Naive thymus-derived CD4-positive, alpha-beta T cell (primary cell): ENCODE measurements at regions of chr1 and their contacts with region 1.

Region 1: GRCh38 chr1:151198255-151199127 is at the start of gene PIP5K1A:
- DNase-seq: peak; percentile 96 to 99 (median 97)
- ATAC-seq: peak; percentile 98
- H3K4me3 ChIP-seq: peak within 1 kb of the TSS; percentile 83
- H3K4me3 Mint-ChIP-seq: peak within 1 kb of the TSS; percentile 93 to 100 (median 98)
- H3K27ac ChIP-seq: peak within 1 kb of the TSS; percentile 88
- H3K27ac Mint-ChIP-seq: peak within 1 kb of the TSS; percentile 95 to 99 (median 98)
- H3K4me1 ChIP-seq: peaks cover 11% of the 10 kb centered on the region in 2 donors
- H3K4me1 Mint-ChIP-seq: peaks cover 31 to 56% (median 46%) of the 10 kb centered on the region in 7 donors
- H3K27me3 ChIP-seq: no peaks in the 10 kb centered on the region
- H3K27me3 Mint-ChIP-seq: peaks cover 0 to 12% (median 0%) of the 10 kb centered on the region in 5 donors
- total RNA-seq, gene PIP5K1A: 56.9 to 76.5 (median 59.5) TPM

Region 2: DNA sequence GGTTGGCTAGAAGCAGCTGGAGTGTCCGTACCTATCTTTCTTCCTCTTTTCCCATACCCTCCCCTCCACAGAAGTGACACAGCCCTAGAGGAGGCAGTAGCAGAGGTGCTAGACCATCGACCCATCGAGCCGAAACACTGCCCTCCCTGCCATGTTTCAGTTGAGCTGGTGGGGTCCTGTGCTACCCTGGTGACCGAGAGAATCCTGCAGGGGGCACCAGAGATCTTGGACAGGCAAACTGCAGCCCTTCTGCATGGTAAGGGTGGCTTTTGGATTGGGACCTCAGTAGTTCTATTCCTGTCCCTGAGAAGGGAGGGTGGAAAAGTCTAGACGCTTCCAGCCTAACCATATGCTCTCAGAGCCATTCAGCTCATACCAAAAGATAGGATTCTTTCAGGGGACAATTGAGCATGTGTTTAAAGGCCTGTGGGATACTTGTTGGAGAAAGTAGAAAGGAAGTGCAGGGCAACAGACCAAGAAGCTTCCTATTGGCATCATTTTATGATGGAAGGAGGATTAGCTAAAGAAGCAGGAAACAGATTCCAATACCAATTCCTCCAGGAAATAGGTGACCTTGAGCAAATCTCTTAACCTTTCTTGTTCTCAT is 173.8 kb before region 1 on chr1:
- CTCF ChIA-PET with region 1: interaction called, 4 read pairs
- POLR2A ChIA-PET with region 1: no interaction called
- intact Hi-C with region 1: loop called in 1 of 2 experiments (anchors 1 kb)
- DNase-seq: peak; percentile 72 to 91 (median 83)
- ATAC-seq: peak; percentile 100
- H3K4me3 ChIP-seq: no peak overlapping the region
- H3K4me3 Mint-ChIP-seq: peak overlapping the region; percentile 16 to 73 (median 61)
- H3K27ac ChIP-seq: no peak overlapping the region
- H3K27ac Mint-ChIP-seq: peak overlapping the region; percentile 37 to 93 (median 74)
- H3K4me1 ChIP-seq: no peaks in the 10 kb centered on the region
- H3K4me1 Mint-ChIP-seq: peaks cover 4 to 22% (median 6%) of the 10 kb centered on the region in 7 donors
- H3K27me3 ChIP-seq: no peaks in the 10 kb centered on the region
- H3K27me3 Mint-ChIP-seq: no peaks in the 10 kb centered on the region

Region 3: GRCh38 chr1:151085953-151086559 is 112.4 kb before region 1 on chr1:
- CTCF ChIA-PET with region 1: no interaction called
- POLR2A ChIA-PET with region 1: no interaction called
- intact Hi-C with region 1: no loop called
- DNase-seq: no peak
- ATAC-seq: no peak
- H3K4me3 ChIP-seq: no peak overlapping the region
- H3K4me3 Mint-ChIP-seq: no peak overlapping the region
- H3K27ac ChIP-seq: no peak overlapping the region
- H3K27ac Mint-ChIP-seq: no peak overlapping the region
- H3K4me1 ChIP-seq: no peaks in the 10 kb centered on the region
- H3K4me1 Mint-ChIP-seq: peaks cover 0 to 2% (median 0%) of the 10 kb centered on the region in 7 donors
- H3K27me3 ChIP-seq: no peaks in the 10 kb centered on the region
- H3K27me3 Mint-ChIP-seq: no peaks in the 10 kb centered on the region

Region 4: GRCh38 chr1:151165738-151166505 is 32.6 kb before region 1 on chr1 and contains the starts of genes LYSMD1 and SCNM1:
- CTCF ChIA-PET with region 1: no interaction called
- POLR2A ChIA-PET with region 1: interaction called, 4 read pairs
- intact Hi-C with region 1: loop called (anchors 1 to 2 kb)
- DNase-seq: peak; percentile 78 to 98 (median 97)
- ATAC-seq: peak; percentile 98
- H3K4me3 ChIP-seq: peak within 1 kb of the TSS; percentile 97
- H3K4me3 Mint-ChIP-seq: peak within 1 kb of the TSS; percentile 87 to 99 (median 95)
- H3K27ac ChIP-seq: peak within 1 kb of the TSS; percentile 71
- H3K27ac Mint-ChIP-seq: peak within 1 kb of the TSS; percentile 90 to 99 (median 97)
- H3K4me1 ChIP-seq: peaks cover 18 to 19% of the 10 kb centered on the region in 2 donors
- H3K4me1 Mint-ChIP-seq: peaks cover 30 to 70% (median 52%) of the 10 kb centered on the region in 7 donors
- H3K27me3 ChIP-seq: no peaks in the 10 kb centered on the region
- H3K27me3 Mint-ChIP-seq: peaks cover 0 to 3% (median 0%) of the 10 kb centered on the region in 5 donors
- total RNA-seq, gene LYSMD1: 1.4 to 3.3 (median 2.3) TPM
- total RNA-seq, gene SCNM1: 37.1 to 73.1 (median 57.1) TPM

Region 5: DNA sequence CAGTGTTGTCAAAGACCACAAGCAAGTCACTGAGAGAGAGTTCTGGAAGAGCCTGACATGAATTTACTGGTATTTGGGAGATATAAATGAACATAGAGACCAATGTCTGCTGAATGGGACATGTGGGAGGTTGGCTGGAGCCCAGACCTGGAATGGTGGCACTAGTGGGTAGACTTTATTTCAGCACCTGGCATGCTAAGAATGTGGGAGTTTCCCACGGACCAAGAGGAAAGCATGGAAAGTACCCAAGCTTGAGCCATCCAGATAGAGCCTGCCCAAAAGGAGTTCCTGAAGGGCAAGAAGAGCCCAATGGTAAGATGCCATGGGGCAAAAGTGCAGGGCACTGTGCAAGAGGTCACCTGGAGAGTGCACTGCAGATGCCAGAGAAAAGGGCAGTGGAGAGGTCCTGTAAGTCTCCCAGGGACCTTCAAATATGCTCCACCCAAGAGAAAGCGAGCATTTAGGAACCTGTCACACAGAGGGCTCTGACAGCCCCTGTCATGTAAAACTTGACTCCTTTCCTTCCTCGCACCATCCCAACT is 75.5 kb after region 1 on chr1:
- CTCF ChIA-PET with region 1: no interaction called
- POLR2A ChIA-PET with region 1: no interaction called
- intact Hi-C with region 1: no loop called
- DNase-seq: no peak
- ATAC-seq: no peak
- H3K4me3 ChIP-seq: no peak overlapping the region
- H3K4me3 Mint-ChIP-seq: no peak overlapping the region
- H3K27ac ChIP-seq: no peak overlapping the region
- H3K27ac Mint-ChIP-seq: peak overlapping the region in 3 of 9 donors; percentile 9 to 60 (median 22)
- H3K4me1 ChIP-seq: no peaks in the 10 kb centered on the region
- H3K4me1 Mint-ChIP-seq: peaks cover 0 to 14% (median 0%) of the 10 kb centered on the region in 7 donors
- H3K27me3 ChIP-seq: no peaks in the 10 kb centered on the region
- H3K27me3 Mint-ChIP-seq: no peaks in the 10 kb centered on the region

Region 6: DNA sequence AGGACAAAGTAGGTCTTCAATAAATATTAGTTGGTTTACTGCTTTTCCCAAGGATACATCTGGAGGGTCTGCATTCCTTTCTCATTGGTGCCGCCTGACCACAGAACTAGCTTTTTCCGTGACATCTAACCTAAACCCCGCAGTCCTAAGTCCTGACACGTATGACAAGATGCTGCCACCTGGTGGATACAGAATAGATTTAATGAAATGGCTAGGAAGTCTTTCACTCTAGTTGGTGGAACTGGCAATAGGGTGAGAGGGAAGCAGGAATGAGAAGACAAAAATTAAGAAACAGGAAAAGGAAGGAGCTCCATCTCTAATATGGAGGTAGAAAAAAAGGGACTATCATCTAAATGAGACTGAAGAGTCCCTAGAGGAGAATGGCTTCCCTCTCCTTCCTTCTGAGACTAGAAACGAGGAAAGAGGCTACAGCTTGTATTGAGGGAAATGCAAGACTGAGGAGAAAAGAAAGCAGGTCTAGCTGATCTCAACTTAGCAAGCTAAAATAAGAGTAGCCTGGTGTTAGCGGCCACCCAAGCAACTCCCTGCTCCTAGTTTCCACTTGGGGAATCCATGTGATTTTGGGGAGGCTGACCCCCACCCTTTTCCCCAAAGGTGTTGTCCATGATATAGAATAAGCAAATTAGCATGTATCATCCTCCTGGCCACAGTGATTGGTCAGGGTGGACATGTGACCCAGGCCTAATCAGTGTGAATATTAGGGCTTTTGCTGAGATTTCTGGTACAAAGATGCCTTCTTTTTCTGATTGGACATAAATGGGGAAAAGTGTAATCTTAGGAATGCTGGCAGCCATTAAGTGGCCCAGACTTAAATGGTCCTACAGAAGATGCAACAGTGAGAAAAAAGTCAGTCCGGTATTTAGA is 142.6 kb after region 1 on chr1:
- CTCF ChIA-PET with region 1: interaction called, 3 read pairs
- POLR2A ChIA-PET with region 1: interaction called, 3 read pairs
- intact Hi-C with region 1: loop called (anchors 1 to 2 kb)
- DNase-seq: peak in 8 of 9 donors; percentile 46 to 75 (median 68)
- ATAC-seq: peak; percentile 92
- H3K4me3 ChIP-seq: no peak overlapping the region
- H3K4me3 Mint-ChIP-seq: peak overlapping the region in 1 of 10 donors; percentile 22
- H3K27ac ChIP-seq: peak overlapping the region; percentile 5
- H3K27ac Mint-ChIP-seq: peak overlapping the region; percentile 1 to 70 (median 52)
- H3K4me1 ChIP-seq: peaks cover 6 to 7% of the 10 kb centered on the region in 2 donors
- H3K4me1 Mint-ChIP-seq: peaks cover 20 to 39% (median 28%) of the 10 kb centered on the region in 7 donors
- H3K27me3 ChIP-seq: no peaks in the 10 kb centered on the region
- H3K27me3 Mint-ChIP-seq: no peaks in the 10 kb centered on the region

Region 7: DNA sequence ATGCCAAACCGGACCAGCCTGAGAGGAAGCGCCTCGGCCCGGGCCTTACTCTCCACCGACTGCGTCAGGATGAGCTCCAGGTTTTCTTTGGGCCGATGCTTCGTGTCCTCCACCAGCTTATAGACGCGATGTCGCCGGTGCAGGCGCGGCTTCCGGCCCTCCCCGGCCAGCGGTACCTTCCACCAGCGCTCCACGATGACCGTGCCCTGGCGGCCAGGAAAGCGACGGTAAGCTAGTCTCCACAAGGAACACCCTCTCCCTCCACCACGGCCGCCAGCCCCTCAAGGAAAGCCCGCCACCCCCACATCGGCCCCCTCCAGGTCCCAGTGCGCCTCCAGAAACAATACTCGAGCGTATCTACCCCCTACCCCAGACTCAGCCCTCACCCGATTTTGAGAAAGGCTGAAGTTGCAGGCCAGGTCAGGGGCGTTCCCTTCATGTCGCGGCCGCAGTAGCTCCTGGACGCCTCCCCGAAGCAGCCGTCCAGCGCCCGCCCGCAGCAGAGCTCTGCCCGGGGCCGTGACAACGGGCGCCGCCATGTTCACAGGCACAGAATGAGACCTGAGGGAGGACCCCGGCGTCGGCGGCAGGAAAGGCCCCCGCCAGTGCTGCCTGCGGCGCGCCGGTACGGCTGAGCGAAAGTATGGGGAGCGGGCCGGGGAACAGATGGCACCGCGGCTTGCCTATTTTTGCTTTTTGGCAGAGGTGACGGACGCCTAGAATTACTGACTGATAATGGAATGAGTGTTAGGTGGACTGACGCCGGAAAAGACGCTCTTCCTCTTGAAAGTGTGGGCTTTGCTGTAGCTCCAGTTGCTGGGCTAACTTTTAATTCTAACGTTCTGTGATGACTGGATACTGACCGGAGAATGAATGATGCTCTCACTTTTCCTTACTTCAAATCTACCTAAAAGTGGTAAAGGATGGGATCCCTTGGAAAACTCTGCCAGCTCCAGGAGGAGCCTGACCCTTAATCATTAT is 564.7 kb after region 1 on chr1 and contains the start of gene MRPL9:
- CTCF ChIA-PET with region 1: no interaction called
- POLR2A ChIA-PET with region 1: no interaction called
- intact Hi-C with region 1: loop called in 1 of 2 experiments (anchors 2 kb)
- DNase-seq: peak; percentile 73 to 85 (median 82)
- ATAC-seq: peak; percentile 99
- H3K4me3 ChIP-seq: peak within 1 kb of the TSS; percentile 76
- H3K4me3 Mint-ChIP-seq: peak within 1 kb of the TSS; percentile 91 to 98 (median 95)
- H3K27ac ChIP-seq: peak within 1 kb of the TSS; percentile 81
- H3K27ac Mint-ChIP-seq: peak within 1 kb of the TSS; percentile 92 to 100 (median 97)
- H3K4me1 ChIP-seq: peaks cover 11 to 12% of the 10 kb centered on the region in 2 donors
- H3K4me1 Mint-ChIP-seq: peaks cover 13 to 28% (median 21%) of the 10 kb centered on the region in 7 donors
- H3K27me3 ChIP-seq: no peaks in the 10 kb centered on the region
- H3K27me3 Mint-ChIP-seq: no peaks in the 10 kb centered on the region
- total RNA-seq, gene MRPL9: 77.0 to 133 (median 81.5) TPM